CD4-positive, alpha-beta memory T cell (primary cell): ENCODE measurements at regions of chr2 and their contacts with region 1.

Region 1: GRCh38 chr2:217886720-217887309 is 116.0 kb downstream of the TNS1 start:
- DNase-seq: peak; percentile 41 to 54 (median 43)
- H3K4me3 ChIP-seq: no peak overlapping the region
- H3K4me3 Mint-ChIP-seq: no peak overlapping the region
- H3K27ac ChIP-seq: no peak overlapping the region
- H3K27ac Mint-ChIP-seq: no peak overlapping the region
- H3K4me1 ChIP-seq: no peaks in the 10 kb centered on the region
- H3K4me1 Mint-ChIP-seq: peaks cover 0 to 4% (median 3%) of the 10 kb centered on the region in 4 donors
- H3K27me3 ChIP-seq: no peaks in the 10 kb centered on the region
- H3K27me3 Mint-ChIP-seq: peaks cover 4 to 6% of the 10 kb centered on the region in 2 donors

Region 2: DNA sequence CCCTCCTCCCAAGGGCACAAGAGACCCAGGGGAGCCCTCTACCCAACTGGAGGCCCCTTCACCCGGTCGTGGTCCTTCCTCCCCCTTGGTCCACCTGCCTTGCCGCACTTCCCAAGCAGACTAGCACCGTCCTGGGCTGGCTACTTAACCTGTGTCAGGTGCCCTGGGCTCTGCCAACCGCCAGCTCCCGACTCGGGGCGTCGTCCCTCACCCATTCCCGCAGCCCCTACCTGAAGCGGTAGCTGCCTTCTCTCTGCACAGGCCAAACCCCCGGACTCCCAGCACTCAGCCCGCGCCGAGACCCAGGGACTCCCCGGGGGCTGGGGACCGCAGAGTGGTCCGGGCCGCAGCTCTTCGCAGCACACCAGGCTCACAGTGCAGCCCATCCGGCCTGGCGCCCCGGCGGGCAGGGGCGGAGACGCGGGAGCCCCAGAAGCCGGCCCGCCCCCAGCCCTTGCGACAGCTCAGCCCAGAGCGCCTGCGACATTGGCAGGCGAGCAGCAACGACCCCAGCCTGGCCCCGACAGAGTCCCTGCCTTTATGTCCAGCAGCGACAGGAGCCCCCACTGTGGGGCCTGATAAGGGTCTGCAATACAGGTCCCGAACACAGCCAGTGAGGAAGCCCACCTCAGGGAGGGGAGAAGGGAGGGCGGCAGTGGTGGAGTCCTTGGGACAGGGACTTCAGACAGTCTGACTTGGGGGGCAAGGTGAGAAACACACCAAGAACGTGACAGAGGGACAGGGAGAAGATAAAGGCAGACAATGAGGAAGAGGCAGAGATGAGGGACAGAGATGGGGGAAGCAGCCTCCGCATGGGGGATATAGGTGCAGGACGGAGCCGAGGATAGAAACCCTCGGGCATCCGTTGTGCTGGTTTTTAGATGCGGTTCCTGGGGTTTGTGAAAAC is 147.0 kb after region 1 on chr2:
- CTCF ChIA-PET with region 1: interaction called, 3 read pairs
- POLR2A ChIA-PET with region 1: no interaction called
- intact Hi-C with region 1: loop called (anchors 5 kb)
- DNase-seq: peak in 1 of 5 donors; percentile 9
- H3K4me3 ChIP-seq: peak overlapping the region in 1 of 2 donors; percentile 63
- H3K4me3 Mint-ChIP-seq: peak overlapping the region; percentile 34 to 85 (median 78)
- H3K27ac ChIP-seq: no peak overlapping the region
- H3K27ac Mint-ChIP-seq: peak overlapping the region in 5 of 7 donors; percentile 24 to 85 (median 52)
- H3K4me1 ChIP-seq: peaks cover 14% of the 10 kb centered on the region
- H3K4me1 Mint-ChIP-seq: peaks cover 4 to 11% (median 6%) of the 10 kb centered on the region in 4 donors
- H3K27me3 ChIP-seq: no peaks in the 10 kb centered on the region
- H3K27me3 Mint-ChIP-seq: peaks cover 2 to 3% of the 10 kb centered on the region in 2 donors